ENCODE measurements at regions of chr2 and their contacts with region 1.

Region 1: GRCh38 chr2:9630749-9631483 is at the start of gene YWHAQ:
- DNase-seq: peak; percentile 99 to 100
- H3K4me3 ChIP-seq: peak within 1 kb of the TSS; percentile 83 to 85
- H3K27ac ChIP-seq: peak within 1 kb of the TSS; percentile 91 to 97
- H3K4me1 ChIP-seq: peaks cover 0 to 58% (median 35%) of the 10 kb centered on the region in 4 donors
- H3K27me3 ChIP-seq: no peaks in the 10 kb centered on the region
- CTCF ChIP-seq: no peak

Region 2: GRCh38 chr2:9423100-9423921 is 207.6 kb before region 1 on chr2 and contains the starts of genes CPSF3 and ITGB1BP1:
- intact Hi-C with region 1: loop called (anchors 10 kb)
- DNase-seq: peak; percentile 96 to 98
- H3K4me3 ChIP-seq: peak within 1 kb of the TSS; percentile 85
- H3K27ac ChIP-seq: peak within 1 kb of the TSS; percentile 89
- H3K4me1 ChIP-seq: peaks cover 0 to 38% (median 37%) of the 10 kb centered on the region in 4 donors
- H3K27me3 ChIP-seq: no peaks in the 10 kb centered on the region
- CTCF ChIP-seq: no peak

Region 3: DNA sequence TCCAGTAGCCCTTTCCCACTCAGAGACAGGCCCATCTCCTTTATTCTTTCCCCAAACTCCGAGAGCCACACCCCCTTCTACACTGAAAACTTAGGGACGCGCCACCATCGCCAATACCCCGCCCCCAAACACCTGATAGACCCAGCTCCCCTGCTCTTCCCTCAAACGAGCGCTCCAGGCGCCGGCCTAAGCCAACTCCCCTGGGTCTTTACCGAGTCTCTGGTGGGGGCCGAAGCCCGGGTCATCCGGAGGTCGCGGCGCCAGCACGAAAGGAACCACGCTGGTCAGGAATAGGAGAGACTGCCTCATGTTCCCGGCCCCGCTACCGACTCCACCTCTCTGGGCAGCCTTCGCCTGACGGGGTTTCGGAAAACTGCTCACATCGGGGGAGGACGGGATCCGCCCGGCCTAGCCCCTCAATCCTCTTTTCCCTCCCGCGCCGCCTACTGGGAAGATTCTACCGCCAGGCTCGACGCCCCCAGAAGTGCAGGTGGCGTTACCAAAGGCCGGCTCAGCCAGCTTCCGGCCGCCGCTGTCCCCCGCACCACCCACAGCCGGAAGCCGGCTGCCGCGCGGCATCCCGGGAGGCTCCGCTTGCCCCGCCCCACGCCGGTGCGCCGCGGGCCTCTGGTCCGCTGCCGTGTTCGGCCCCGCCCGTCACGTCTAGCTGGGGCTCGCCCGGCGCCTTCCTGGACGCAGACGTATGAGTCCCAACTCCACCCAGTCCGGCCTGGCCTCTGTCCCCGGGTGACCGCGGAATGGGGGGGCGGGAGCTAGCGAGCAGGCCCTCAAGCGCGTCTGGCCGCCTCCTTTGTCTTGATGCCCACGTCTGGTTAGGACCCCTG is 75.4 kb before region 1 on chr2 and contains the start of gene ADAM17:
- intact Hi-C with region 1: loop called (anchors 5 kb)
- DNase-seq: peak; percentile 97 to 99
- H3K4me3 ChIP-seq: peak within 1 kb of the TSS; percentile 78 to 88
- H3K27ac ChIP-seq: peak within 1 kb of the TSS; percentile 98
- H3K4me1 ChIP-seq: peaks cover 0 to 73% (median 44%) of the 10 kb centered on the region in 4 donors
- H3K27me3 ChIP-seq: no peaks in the 10 kb centered on the region
- CTCF ChIP-seq: peak; percentile 53 to 68

Region 4: DNA sequence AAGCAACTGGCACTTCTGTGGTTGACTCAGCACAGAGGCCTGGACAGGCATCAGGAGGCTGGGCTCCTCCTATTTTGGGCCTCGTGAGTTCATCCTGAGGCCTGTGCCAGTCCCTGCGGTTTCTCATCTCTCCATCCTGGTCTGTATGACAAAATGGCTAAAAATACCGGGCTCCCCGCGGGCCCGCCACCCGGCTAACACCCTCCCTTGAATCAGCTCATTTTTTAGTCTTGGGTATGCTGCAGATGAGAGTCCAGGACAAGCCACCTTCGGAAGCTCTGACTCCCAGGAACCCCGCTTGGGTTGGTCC is 62.2 kb after region 1 on chr2:
- intact Hi-C with region 1: loop called (anchors 10 kb)
- DNase-seq: peak; percentile 85 to 92
- H3K4me3 ChIP-seq: peak overlapping the region; percentile 22 to 39
- H3K27ac ChIP-seq: peak overlapping the region; percentile 86 to 87
- H3K4me1 ChIP-seq: peaks cover 0 to 16% (median 10%) of the 10 kb centered on the region in 4 donors
- H3K27me3 ChIP-seq: no peaks in the 10 kb centered on the region
- CTCF ChIP-seq: no peak

Region 5: DNA sequence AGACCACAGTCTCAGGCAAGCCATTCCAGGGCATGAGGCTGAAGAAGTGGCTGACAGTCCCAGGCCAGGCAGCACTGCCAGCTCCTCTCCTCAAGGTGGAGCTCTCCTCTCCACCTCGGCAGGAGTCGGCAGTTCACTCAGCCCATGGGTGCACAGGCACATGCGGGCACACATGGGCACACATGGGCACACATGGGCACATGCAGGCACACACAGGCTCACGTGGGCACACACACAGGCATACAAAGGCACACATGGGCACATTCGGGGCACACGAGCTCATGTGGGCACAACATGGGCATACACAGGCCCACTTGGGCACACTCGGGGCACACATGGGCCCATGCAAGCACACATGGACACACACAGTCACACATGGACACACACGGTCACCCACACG is 147.1 kb after region 1 on chr2:
- intact Hi-C with region 1: no loop called
- DNase-seq: peak in 1 of 2 donors; percentile 56
- H3K4me3 ChIP-seq: no peak overlapping the region
- H3K27ac ChIP-seq: no peak overlapping the region
- H3K4me1 ChIP-seq: no peaks in the 10 kb centered on the region
- H3K27me3 ChIP-seq: no peaks in the 10 kb centered on the region
- CTCF ChIP-seq: no peak